ENCODE measurements at regions of chr14 and their contacts with region 1.

Region 1: GRCh38 chr14:24114536-24115450 is at the starts of genes DCAF11 and NRL:
- DNase-seq: peak; percentile 97 to 99
- H3K4me3 ChIP-seq: peak within 1 kb of the TSS; percentile 78 to 79
- H3K27ac ChIP-seq: peak within 1 kb of the TSS; percentile 98 to 100
- H3K4me1 ChIP-seq: peaks cover 9 to 16% of the 10 kb centered on the region in 2 donors
- H3K27me3 ChIP-seq: no peaks in the 10 kb centered on the region
- CTCF ChIP-seq: no peak
- total RNA-seq, gene DCAF11: 52.3 TPM
- total RNA-seq, gene NRL: not detected

Region 2: DNA sequence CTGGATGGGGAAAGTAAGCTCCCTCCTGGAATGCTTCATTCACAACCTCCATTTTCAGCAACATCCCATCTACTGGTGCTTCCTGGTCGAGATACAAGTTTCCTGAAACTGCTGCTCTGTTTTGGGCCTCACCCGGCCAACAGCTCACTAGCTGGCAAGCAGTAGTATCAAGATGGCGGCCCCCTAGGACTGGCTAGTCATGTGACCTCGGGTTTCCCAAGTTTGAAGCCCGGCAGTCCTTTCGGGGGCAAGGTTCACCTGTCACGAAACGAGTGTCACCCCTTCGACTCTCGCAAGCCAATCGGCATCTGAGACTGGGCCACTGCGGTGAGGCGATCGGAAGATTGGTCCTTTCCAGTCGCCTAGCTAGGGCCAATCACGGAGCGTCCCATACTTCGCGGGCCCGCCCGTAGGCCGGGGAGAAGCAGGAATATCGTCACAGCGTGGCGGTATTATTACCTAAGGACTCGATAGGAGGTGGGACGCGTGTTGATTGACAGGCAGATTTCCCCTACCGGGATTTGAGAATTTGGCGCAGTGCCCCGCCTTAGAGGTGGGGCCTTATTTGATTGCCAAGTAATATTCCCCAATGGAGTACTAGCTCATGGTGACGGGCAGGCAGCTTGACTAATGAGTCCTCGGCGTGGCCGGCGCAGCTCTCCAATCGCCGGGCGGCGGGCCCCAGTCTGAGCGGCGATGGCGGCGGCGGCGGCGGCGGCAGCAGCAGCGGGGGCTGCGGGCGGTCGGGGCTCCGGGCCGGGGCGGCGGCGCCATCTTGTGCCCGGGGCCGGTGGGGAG is 793.8 kb before region 1 on chr14 and contains the start of gene PABPN1:
- intact Hi-C with region 1: loop called (anchors 1 kb)
- DNase-seq: peak; percentile 98 to 100
- H3K4me3 ChIP-seq: peak within 1 kb of the TSS; percentile 98 to 99
- H3K27ac ChIP-seq: peak within 1 kb of the TSS; percentile 98 to 99
- H3K4me1 ChIP-seq: peaks cover 5 to 16% of the 10 kb centered on the region in 2 donors
- H3K27me3 ChIP-seq: no peaks in the 10 kb centered on the region
- CTCF ChIP-seq: no peak
- total RNA-seq, gene PABPN1: 90.6 TPM

Region 3: DNA sequence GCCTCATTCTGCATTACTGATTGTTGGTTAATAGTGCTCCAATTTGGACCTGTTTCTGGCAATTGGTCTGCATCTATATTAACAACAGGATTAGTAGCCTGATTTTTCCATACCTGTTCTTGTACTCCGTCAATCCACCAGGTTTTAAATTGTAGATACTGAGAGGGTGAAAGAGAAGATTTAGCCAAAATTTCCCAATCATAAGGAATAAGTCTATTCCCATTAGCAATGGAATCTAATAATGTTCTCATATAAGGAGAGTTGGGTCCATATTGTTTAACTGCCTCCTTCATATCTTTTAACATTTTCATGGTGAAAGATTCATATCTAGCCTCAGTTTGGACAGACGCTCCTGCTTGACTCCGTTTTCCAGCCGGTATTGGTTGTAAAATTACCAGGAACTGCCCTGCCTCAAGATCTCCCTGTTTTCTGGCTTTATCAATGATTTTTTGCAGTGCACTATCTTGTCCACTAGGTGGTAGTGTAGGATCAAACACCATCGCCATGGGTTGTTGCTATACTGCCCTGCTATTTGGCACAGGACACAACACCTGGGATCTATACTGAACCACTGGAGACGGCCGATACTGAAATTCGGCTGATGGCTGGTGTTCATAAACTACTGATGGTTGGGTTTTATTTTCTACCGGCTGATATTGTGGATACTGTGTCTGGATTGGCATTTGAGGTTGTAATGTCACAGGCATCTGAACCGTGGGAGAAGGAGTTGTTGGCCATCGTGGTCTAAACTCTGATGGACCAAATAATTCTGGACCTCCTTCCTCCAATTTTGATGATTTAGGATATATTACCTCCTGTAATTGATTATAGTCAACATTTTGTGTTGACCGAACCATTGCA is 100.9 kb before region 1 on chr14:
- intact Hi-C with region 1: loop called (anchors 1 kb)
- DNase-seq: no peak
- H3K4me3 ChIP-seq: no peak overlapping the region
- H3K27ac ChIP-seq: no peak overlapping the region
- H3K4me1 ChIP-seq: peaks cover 0 to 4% of the 10 kb centered on the region in 2 donors
- H3K27me3 ChIP-seq: no peaks in the 10 kb centered on the region
- CTCF ChIP-seq: peak; percentile 74 to 93 (median 82)

Region 4: DNA sequence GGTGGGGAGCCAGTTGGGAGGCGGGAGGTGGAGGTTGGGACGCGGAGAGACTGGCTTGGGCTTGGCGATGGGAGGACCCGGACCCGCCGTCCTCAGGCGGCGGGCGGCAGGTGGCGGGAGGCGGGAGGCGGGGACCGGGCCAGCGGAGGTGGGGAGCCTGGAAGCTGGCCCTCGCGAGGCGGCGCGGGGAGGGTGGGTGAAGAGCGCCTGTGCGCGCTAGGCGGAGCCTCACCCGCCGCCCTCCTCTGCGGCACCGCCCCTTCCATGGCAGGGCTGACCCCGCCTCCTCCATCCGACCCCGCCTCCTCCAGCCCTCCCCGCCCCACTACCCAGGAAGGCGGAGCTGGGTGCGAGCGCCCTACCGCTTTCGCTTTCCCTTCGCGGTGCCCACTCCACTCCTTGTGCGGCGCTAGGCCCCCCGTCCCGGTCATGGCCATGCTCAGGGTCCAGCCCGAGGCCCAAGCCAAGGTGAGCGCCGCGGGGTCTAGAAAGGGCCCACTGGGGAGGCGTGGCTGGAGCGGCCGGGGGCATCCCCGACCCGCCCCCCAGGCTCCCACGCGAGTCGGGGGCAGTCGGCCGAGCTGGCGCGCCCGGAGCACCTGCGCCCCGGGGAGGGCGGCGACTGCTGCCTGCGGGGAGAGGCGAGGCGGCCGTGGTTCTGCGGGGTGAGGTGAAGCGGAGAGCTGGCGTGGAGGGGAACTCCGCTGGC is 21.2 kb after region 1 on chr14 and contains the start of gene PSME1:
- intact Hi-C with region 1: loop called (anchors 1 kb)
- DNase-seq: peak; percentile 66 to 94
- H3K4me3 ChIP-seq: peak within 1 kb of the TSS; percentile 82 to 96
- H3K27ac ChIP-seq: peak within 1 kb of the TSS; percentile 80 to 91
- H3K4me1 ChIP-seq: peaks cover 5 to 27% of the 10 kb centered on the region in 2 donors
- H3K27me3 ChIP-seq: no peaks in the 10 kb centered on the region
- CTCF ChIP-seq: peak in 1 of 3 experiments; percentile 16
- total RNA-seq, gene PSME1: 55.5 TPM

Region 5: DNA sequence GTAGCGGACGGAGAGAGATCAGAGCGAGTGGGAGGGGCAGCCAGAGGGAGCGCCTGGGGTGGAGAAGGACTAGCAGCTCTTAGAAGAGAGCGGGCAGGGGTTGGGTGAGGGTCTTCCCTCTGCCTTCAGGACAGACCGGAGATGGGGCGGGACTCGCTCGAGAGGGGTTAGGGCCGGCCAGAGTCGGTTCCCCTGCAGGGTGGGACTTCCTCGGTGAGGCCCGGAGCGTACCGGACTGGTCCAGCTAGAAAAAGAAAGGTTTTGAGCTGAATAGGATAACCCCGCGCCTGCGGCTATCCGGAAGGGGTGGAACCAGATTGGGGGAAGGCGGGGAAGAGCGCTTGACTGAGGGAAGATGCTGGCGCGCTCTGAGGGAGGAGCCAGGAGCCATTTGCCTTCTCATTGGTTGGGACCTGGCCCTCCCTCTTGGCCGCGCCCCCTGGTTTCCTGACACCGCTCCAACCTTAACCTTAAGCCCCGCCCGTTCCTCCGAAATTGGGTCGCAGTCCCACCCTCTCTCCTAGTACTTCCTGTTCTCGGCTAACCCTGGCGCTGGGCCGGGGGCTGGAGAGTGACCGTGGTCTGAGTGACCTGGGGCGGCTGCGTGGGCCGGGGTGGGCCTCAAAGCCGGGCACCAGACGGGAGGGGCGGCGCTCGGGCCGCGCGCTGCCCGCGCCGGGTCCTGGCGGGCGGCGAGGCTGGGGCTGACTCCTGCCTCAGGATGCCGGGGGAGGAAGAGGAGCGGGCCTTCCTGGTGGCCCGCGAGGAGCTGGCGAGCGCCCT is 32.4 kb after region 1 on chr14 and contains the start of gene RNF31:
- intact Hi-C with region 1: loop called (anchors 1 kb)
- DNase-seq: peak; percentile 95 to 99
- H3K4me3 ChIP-seq: peak within 1 kb of the TSS; percentile 76 to 100
- H3K27ac ChIP-seq: peak within 1 kb of the TSS; percentile 75 to 90
- H3K4me1 ChIP-seq: peaks cover 21 to 23% of the 10 kb centered on the region in 2 donors
- H3K27me3 ChIP-seq: no peaks in the 10 kb centered on the region
- CTCF ChIP-seq: no peak
- total RNA-seq, gene RNF31: 182 TPM

Region 6: DNA sequence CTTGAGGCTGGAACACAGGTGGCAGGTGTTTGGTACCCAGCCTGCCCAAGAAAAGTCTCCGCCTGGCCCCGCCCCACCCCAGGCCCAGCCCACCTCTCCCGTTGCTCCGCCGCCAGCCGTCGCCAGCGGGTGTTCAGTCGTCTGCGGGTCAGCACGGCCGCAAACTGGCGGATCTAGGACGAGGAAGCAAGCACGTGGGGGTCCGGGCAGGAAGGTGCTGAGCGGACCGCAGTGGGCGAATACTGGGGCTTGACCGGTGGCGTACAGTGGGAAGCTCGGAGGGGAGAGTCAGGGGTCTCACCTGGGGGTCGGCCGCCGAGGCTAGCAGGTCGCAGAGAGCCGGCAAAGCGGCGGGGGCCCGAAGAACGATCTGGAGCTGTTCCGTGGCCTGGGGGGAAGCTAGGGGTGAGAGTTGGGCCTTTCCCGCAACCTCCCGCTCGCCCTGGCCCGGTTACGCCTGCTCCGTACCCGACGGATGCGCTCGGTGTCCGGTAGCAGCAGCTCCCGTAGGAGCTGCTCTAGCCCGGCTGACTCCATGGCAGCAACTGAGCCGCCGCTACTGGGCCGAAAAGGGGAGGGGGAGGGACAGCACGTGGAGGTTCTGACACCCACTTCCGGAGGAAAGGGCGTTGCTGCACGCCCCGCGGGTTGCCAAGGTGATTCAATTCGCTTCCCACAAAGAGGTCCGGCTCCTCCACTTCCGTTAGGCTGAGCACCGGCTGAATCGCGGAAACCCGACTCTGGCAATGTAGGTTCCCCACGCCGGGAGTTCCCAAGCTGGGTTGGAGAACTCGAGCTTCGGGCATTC is 73.7 kb after region 1 on chr14 and contains the start of gene IPO4:
- intact Hi-C with region 1: loop called (anchors 2 kb)
- DNase-seq: peak; percentile 81 to 97
- H3K4me3 ChIP-seq: peak within 1 kb of the TSS; percentile 50 to 83
- H3K27ac ChIP-seq: peak within 1 kb of the TSS; percentile 43 to 58
- H3K4me1 ChIP-seq: peaks cover 0 to 19% of the 10 kb centered on the region in 2 donors
- H3K27me3 ChIP-seq: no peaks in the 10 kb centered on the region
- CTCF ChIP-seq: no peak
- total RNA-seq, gene IPO4: 140 TPM

Region 7: GRCh38 chr14:24299255-24300195 is 184.7 kb after region 1 on chr14 and contains the starts of genes DHRS1 and NOP9:
- intact Hi-C with region 1: no loop called
- DNase-seq: peak; percentile 48 to 96
- H3K4me3 ChIP-seq: peak within 1 kb of the TSS; percentile 51 to 84
- H3K27ac ChIP-seq: peak within 1 kb of the TSS; percentile 64 to 67
- H3K4me1 ChIP-seq: peaks cover 3 to 12% of the 10 kb centered on the region in 2 donors
- H3K27me3 ChIP-seq: no peaks in the 10 kb centered on the region
- CTCF ChIP-seq: no peak
- total RNA-seq, gene DHRS1: 100 TPM
- total RNA-seq, gene NOP9: 33.5 TPM

Region 8: DNA sequence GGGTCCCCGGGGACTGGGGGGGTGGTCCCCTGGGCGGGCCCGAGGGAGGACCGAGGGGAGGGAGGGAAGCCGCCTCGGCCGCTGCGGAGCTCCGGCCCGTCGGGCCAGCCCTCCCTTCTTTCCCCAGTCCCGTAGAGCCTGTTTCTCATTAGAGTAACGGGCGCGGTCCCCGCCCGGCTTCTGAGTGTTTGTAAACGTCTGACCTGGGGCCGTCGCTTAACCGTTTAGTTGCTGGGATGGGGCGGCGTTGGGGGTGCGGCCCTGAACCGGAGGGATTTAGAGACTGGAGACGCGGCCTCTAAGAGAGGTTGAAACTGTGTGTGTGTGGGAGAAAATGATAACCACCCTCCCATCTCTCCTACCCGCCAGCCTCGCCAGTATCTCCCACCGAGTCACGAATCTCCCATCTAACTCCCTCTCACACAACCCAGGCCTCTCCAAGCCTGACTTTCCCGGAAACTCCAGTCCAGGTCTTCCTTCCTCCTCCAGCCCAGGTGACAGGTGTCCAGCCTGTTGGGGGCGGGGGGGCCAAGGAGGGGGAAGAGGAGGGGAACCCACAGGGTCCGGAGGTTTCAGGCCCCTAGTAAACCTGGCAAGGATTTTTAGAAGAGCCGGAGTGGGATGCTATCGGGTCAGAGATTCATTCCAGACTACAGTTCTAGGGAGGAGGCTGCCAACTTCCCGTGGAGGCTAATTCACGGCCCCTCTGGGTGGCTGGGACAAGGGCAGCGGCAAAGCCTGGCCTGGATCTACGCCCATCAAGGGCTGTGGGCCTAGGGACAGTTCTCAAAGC is 252.1 kb after region 1 on chr14:
- intact Hi-C with region 1: loop called (anchors 10 kb)
- DNase-seq: peak; percentile 65 to 96
- H3K4me3 ChIP-seq: peak overlapping the region; percentile 67 to 78
- H3K27ac ChIP-seq: peak overlapping the region; percentile 96 to 99
- H3K4me1 ChIP-seq: peaks cover 6 to 18% of the 10 kb centered on the region in 2 donors
- H3K27me3 ChIP-seq: no peaks in the 10 kb centered on the region
- CTCF ChIP-seq: no peak

Measured in ascending aorta (tissue), 2 donors.